ENCODE measurements at regions of chr11 and their contacts with region 1.

Region 1: GRCh38 chr11:117583063-117583801 is 213.8 kb downstream of the DSCAML1 start:
- DNase-seq: no peak
- H3K4me3 ChIP-seq: no peak overlapping the region
- CTCF ChIP-seq: no peak

Region 2: GRCh38 chr11:117300283-117300663 is 283.0 kb before region 1 on chr11:
- in situ Hi-C with region 1: no loop called
- DNase-seq: peak; percentile 24
- H3K4me3 ChIP-seq: no peak overlapping the region
- CTCF ChIP-seq: no peak

Region 3: DNA sequence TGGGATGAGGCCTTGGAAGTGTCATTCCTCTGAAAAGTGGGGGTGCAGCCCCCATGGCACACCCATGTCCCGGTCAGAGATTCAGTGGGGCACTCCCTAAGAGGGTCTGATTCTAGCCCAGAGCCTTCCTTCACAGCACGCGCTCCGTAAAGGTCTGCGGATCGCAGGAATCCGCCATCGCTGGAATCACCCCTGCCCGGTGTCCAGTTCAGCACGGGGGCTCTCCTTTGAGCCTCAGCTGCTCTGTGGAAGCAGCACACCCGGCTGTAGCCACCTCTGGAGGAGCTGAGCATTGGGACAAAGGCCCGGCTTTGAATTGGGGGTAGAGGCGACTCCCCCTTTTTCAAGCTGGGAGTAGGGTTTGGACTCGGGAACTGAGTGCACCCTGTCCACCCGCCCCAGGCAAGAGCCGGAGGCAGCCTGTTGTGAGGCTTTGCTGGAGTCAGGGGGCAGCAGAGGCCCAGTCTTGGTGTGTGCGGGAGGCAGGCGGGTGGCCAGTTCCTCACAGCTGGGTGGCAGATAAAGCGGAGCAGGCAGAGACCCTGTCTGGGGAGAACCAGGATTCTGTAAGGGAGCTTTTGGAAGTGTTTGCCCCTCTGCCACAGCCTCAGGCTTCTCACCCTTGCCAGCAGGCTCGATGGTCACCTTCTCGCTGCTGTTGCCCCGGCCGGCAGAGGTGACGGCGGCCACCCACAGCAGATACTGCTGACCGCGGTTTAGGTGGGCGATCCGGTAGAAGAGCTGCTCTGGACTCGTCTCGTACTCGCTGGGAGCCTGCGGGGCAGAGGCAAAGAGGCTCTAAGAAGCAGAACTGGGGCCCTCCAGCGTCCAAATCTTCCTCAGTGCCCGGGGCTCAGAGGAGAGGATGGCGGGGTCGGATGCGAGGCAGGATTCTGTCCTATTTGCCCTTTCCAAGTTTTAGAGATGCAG is 139.7 kb before region 1 on chr11:
- in situ Hi-C with region 1: loop called (anchors 5 kb)
- DNase-seq: no peak
- H3K4me3 ChIP-seq: no peak overlapping the region
- CTCF ChIP-seq: peak; percentile 58

Region 4: GRCh38 chr11:117621226-117621625 is 38.0 kb after region 1 on chr11:
- in situ Hi-C with region 1: no loop called
- DNase-seq: no peak
- H3K4me3 ChIP-seq: no peak overlapping the region
- CTCF ChIP-seq: peak; percentile 58

Region 5: DNA sequence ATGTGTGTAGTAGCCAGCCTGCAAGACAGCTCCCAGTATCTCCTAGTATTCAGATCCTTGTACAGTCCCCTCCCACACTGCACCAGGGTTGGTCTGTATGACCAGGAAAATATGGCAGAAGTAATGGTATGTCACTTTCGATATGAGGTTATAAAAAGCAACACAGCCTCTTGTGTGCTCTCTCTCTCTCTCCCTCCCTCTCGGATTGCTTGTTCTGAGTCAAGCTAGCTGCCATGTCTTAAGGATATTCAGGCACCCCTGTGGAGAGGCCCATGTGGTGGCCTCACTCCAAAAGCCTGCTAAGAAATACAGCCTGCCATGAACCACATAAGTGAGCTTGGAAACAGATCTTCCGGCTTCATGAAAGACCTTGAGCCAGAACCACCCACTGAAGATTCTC is 267.9 kb after region 1 on chr11:
- in situ Hi-C with region 1: no loop called
- DNase-seq: peak; percentile 55
- H3K4me3 ChIP-seq: no peak overlapping the region
- CTCF ChIP-seq: no peak